ENCODE measurements at regions of chr6 and their contacts with region 1.

Region 1: DNA sequence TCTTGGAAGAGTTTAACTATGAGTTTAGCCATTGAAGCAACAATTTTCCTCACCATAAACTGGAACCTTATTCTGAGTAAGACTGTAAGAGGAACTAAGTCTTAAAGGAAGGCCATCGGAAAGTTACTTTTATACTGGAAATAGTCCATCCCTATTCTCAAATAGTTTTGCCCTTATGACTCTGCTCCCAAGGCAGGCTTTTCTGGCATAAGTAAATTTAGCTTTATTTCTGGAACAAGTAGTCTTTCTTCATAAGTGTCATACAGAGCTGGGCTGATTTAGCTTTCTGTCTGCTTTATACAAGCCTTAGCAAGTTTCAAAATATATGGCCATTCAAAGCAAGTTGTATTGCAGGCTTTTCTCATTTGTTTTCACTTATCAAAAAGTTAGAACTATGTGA is 328.1 kb downstream of the HACE1 start:
- DNase-seq: no peak
- ATAC-seq: no peak
- H3K4me3 ChIP-seq: no peak overlapping the region
- H3K27ac ChIP-seq: no peak overlapping the region
- H3K4me1 ChIP-seq: no peaks in the 10 kb centered on the region
- H3K27me3 ChIP-seq: no peaks in the 10 kb centered on the region
- CTCF ChIP-seq: no peak

Region 2: DNA sequence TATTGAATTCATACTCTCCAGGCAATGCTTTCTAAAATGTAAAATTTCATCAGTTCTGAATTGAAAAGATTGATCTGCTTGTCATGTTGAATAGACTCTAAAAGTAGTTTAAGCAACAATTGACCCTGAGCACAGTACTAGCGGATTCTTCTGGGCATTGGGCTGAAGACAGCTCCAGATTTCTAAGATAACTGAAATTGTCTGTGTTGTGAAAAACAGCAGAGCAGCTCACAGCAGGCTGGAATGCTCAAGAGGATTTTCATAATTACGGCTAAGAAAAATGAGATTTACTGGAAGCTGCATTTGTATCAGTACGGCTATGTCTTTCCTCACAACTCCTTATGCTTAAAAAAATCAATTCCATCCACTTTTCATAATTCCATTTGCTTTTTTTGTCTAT is 45.6 kb before region 1 on chr6:
- intact Hi-C with region 1: no loop called
- DNase-seq: no peak
- ATAC-seq: no peak
- H3K4me3 ChIP-seq: no peak overlapping the region
- H3K27ac ChIP-seq: no peak overlapping the region
- H3K4me1 ChIP-seq: no peaks in the 10 kb centered on the region
- H3K27me3 ChIP-seq: no peaks in the 10 kb centered on the region
- CTCF ChIP-seq: no peak

Region 3: DNA sequence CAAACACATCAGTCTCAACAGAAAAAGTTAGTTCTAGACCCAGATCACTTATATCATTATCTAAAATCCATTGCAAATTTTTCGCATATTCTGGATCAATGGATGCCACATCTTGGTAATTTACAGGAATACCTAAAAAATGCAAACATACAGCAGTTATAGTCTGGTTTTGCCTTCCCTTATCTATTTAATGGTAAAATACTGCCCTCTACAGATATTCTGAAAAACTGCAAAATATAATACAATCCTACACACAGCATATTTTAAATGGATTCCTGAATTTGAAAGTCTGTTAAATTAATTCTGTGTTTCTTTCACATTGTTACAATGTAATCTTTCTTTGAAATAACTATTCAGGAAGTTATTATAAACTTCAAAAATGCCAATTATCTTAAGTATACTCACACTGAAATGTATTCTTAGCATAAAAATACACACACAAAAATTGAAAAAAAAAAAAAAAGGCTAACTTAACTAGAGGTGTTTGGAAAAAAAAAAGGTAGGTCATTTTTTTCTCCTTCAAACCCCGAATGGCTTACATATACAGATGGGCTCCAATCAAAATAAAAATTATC is 239.7 kb after region 1 on chr6:
- intact Hi-C with region 1: loop called (anchors 5 kb)
- DNase-seq: no peak
- ATAC-seq: peak; percentile 43 to 71
- H3K4me3 ChIP-seq: no peak overlapping the region
- H3K27ac ChIP-seq: no peak overlapping the region
- H3K4me1 ChIP-seq: no peaks in the 10 kb centered on the region
- H3K27me3 ChIP-seq: no peaks in the 10 kb centered on the region
- CTCF ChIP-seq: peak; percentile 61

Measured in lower lobe of right lung (tissue), 2 donors.